GM12878 (cell line): ENCODE measurements at regions of chr1 and their contacts with region 1.

Region 1: DNA sequence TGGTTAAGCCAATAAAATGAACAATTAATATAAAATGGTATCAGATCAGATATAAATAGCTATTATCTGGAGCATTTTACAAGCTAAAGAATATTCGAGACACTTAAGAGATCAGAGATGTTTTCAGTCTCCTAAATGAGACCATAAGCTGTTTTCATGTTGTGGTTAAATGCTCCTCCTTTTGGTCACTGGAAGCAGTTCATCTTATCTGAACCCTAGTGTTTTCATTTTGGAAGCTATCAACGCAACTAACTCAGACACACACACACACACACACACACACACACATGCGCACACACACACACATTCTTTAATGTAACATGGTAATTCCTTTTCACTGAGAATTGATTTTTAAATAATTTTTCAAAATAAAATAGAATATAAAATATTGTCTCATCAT is 10.0 kb upstream of the LRRC8C start:
- DNase-seq: no peak
- ATAC-seq: no peak
- H3K4me3 ChIP-seq: no peak overlapping the region
- H3K27ac ChIP-seq: no peak overlapping the region
- H3K4me1 ChIP-seq: no peaks in the 10 kb centered on the region; the same call in 1 of the 2 replicates
- H3K27me3 ChIP-seq: no peaks in the 10 kb centered on the region
- CTCF ChIP-seq: peak in 1 of 3 experiments; percentile 17; a peak in 1 of 6 replicates
- EP300 ChIP-seq: no peak
- POLR2A ChIP-seq: no peak
- RAD21 ChIP-seq: peak; percentile 15; the same call in 1 of the 2 replicates

Region 2: DNA sequence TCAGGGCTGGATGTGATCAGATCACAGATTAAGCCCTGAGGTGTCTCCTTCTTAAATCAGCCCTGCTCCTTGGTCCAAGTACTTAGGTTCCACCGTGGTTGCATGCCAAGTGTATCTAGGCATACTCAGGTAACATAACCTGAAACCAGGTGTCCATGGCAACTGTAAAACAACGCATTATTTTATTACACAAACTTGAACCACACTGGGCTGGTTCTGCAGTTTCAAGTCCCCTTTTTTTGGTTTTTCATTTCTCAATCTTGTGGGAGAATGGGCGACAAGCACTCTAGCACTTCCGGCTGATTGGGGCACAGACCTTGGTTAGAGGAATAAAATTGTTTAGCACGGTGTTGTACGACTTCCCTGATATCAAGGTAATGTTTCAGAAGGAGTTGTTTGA is 193.8 kb before region 1 on chr1:
- CTCF ChIA-PET with region 1: no interaction called
- POLR2A ChIA-PET with region 1: no interaction called
- RAD21 ChIA-PET with region 1: no interaction called
- SMC1A ChIA-PET with region 1: no interaction called
- in situ Hi-C with region 1: no loop called
- intact Hi-C with region 1: no loop called
- DNase-seq: no peak
- ATAC-seq: peak; percentile 87
- H3K4me3 ChIP-seq: no peak overlapping the region
- H3K27ac ChIP-seq: no peak overlapping the region
- H3K4me1 ChIP-seq: no peaks in the 10 kb centered on the region
- H3K27me3 ChIP-seq: no peaks in the 10 kb centered on the region; a peak in 1 of 4 replicates
- CTCF ChIP-seq: no peak
- EP300 ChIP-seq: 0 out of 4 replicates have a peak, but pooled peaks of 1 of the 2 experiments have one; percentile 17
- POLR2A ChIP-seq: no peak
- RAD21 ChIP-seq: no peak

Region 3: GRCh38 chr1:89605692-89606091 is 17.2 kb before region 1 on chr1:
- CTCF ChIA-PET with region 1: interaction called, 10 read pairs
- POLR2A ChIA-PET with region 1: interaction called, 3 read pairs
- RAD21 ChIA-PET with region 1: interaction called, 17 read pairs
- SMC1A ChIA-PET with region 1: interaction called, 42 read pairs
- in situ Hi-C with region 1: no loop called
- intact Hi-C with region 1: no loop called
- DNase-seq: no peak
- ATAC-seq: no peak
- H3K4me3 ChIP-seq: no peak overlapping the region
- H3K27ac ChIP-seq: no peak overlapping the region
- H3K4me1 ChIP-seq: peaks cover 14% of the 10 kb centered on the region
- H3K27me3 ChIP-seq: no peaks in the 10 kb centered on the region; a peak in 1 of 4 replicates
- CTCF ChIP-seq: no peak
- EP300 ChIP-seq: no peak
- POLR2A ChIP-seq: no peak
- RAD21 ChIP-seq: no peak

Region 4: DNA sequence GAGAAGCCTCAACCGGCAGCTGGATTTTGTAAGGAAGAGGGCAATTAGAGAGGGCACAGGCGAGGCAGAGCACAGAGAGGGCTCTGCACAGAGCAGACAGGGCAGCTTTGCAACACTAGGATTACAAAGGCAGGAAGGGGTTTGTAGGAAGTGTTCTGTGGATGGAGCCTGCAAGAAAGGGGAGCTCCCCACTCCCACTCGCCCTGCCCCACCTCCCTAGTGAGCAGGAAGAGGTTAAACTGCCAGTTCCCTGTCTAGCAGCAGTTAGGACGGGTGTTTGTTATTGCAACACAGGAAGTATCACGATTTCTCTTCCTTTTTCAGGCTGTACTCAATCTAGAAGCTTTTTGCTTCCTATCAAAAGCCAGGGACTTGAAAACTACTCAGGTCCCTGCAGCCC is 134.6 kb after region 1 on chr1:
- CTCF ChIA-PET with region 1: interaction called, 369 read pairs
- POLR2A ChIA-PET with region 1: no interaction called
- RAD21 ChIA-PET with region 1: interaction called, 302 read pairs
- SMC1A ChIA-PET with region 1: interaction called, 391 read pairs
- in situ Hi-C with region 1: loop called (anchors 5 kb)
- intact Hi-C with region 1: no loop called
- DNase-seq: no peak
- ATAC-seq: peak; percentile 53
- H3K4me3 ChIP-seq: no peak overlapping the region
- H3K27ac ChIP-seq: no peak overlapping the region
- H3K4me1 ChIP-seq: peaks cover 6% of the 10 kb centered on the region; the same call in 1 of the 2 replicates
- H3K27me3 ChIP-seq: no peaks in the 10 kb centered on the region
- CTCF ChIP-seq: no peak
- EP300 ChIP-seq: no peak
- POLR2A ChIP-seq: no peak
- RAD21 ChIP-seq: no peak